GM12878 (cell line): ENCODE measurements at regions of chr6 and their contacts with region 1.

Region 1: DNA sequence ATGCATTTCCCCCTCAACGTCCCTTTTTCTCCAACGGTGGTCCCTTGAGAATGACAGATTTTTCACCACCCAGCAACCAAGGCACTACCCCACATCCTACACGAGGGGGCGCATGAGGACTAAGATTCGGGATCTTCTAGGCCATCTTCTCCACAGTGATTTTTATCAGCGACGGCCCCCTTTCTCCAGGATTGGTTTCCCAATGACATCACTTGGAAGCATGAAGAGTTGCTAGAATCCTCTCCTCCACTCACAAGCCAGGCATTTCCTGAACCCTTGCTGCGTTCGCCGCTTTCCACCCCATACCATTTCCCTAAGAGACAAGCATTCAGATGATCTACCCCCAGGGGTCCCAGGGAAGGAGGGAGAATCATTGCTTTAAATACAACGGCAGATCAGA is 252.0 kb downstream of the HIVEP2 start:
- DNase-seq: no peak
- ATAC-seq: peak; percentile 91
- H3K4me3 ChIP-seq: no peak overlapping the region
- H3K27ac ChIP-seq: no peak overlapping the region
- H3K4me1 ChIP-seq: peaks cover 3% of the 10 kb centered on the region; the same call in 1 of the 2 replicates
- H3K27me3 ChIP-seq: no peaks in the 10 kb centered on the region
- CTCF ChIP-seq: peak; percentile 87 to 93 (median 89)
- EP300 ChIP-seq: no peak
- POLR2A ChIP-seq: no peak
- RAD21 ChIP-seq: peak; percentile 98

Region 2: DNA sequence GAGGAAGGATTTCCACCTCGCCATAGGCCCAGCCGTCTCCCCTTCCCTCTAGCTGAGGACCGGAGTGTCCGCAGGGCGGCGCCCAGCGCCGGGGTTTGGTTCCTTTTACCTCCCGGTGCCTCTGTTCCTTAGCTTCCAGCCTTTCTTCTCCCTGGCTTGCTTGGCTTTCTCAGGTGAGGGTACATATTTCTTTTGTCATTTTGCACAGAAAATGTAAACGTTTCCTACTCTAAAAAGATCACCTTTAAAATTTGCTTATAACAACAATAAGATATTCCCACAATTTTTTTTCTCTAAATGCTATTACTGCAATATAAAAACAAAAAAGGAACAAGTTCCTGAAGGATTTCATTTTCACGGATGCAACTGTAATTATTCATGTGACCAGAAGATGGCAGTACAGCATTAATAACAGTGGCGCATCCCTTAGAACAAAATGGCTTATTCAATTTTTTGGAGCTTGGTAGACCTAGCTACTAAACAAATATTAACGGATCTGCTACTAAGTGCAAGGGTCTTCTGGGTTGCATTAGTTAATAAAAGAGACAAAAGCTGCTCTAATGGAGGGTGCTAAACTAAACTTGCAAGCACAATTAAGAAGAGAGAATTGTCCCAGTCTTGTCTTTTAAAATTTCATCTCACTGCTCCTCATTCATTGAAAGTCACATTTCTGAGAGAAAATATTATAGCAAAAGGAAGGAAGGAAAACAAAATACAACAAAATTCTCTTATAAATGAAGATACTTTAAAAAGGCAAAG is 218.2 kb before region 1 on chr6:
- CTCF ChIA-PET with region 1: interaction called, 4 read pairs
- POLR2A ChIA-PET with region 1: no interaction called
- RAD21 ChIA-PET with region 1: no interaction called
- SMC1A ChIA-PET with region 1: no interaction called
- in situ Hi-C with region 1: no loop called
- intact Hi-C with region 1: loop called (anchors 5 kb)
- DNase-seq: no peak
- ATAC-seq: peak; percentile 69
- H3K4me3 ChIP-seq: no peak overlapping the region
- H3K27ac ChIP-seq: no peak overlapping the region
- H3K4me1 ChIP-seq: no peaks in the 10 kb centered on the region
- H3K27me3 ChIP-seq: no peaks in the 10 kb centered on the region; a peak in 1 of 4 replicates
- CTCF ChIP-seq: peak; percentile 53 to 79 (median 64); a peak in 5 of 6 replicates
- EP300 ChIP-seq: no peak
- POLR2A ChIP-seq: no peak
- RAD21 ChIP-seq: peak; percentile 89

Region 3: GRCh38 chr6:142819603-142820337 is 126.8 kb after region 1 on chr6:
- CTCF ChIA-PET with region 1: interaction called, 11 read pairs
- POLR2A ChIA-PET with region 1: no interaction called
- RAD21 ChIA-PET with region 1: interaction called, 6 read pairs
- SMC1A ChIA-PET with region 1: interaction called, 13 read pairs
- in situ Hi-C with region 1: no loop called
- intact Hi-C with region 1: no loop called
- DNase-seq: peak; percentile 90
- ATAC-seq: peak; percentile 67
- H3K4me3 ChIP-seq: peak overlapping the region; percentile 39; the same call in 1 of the 2 replicates
- H3K27ac ChIP-seq: peak overlapping the region; percentile 88
- H3K4me1 ChIP-seq: peaks cover 40% of the 10 kb centered on the region
- H3K27me3 ChIP-seq: no peaks in the 10 kb centered on the region
- CTCF ChIP-seq: no peak
- EP300 ChIP-seq: peak; percentile 51 to 97
- POLR2A ChIP-seq: no peak
- RAD21 ChIP-seq: 0 out of 2 replicates have a peak, but pooled peaks have one; percentile 4

Region 4: DNA sequence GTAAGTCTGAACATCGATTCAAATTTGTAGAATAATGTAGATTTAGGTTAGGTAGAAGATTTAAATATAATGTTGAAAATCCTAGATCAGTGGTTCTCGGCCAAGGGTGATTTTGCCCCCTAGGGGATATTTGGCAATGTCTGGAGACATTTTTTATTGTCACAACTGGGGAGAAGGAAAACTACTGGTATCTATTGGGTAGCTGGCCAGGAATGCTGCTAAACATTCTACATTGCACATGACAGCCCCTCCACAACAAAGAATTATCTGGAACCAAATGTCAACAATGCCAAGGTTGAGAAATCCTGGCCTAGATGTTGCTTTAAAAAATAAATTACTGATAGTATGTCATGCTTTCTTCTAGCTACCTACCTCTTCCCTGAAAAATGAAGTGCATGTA is 176.0 kb after region 1 on chr6:
- CTCF ChIA-PET with region 1: no interaction called
- POLR2A ChIA-PET with region 1: no interaction called
- RAD21 ChIA-PET with region 1: no interaction called
- SMC1A ChIA-PET with region 1: no interaction called
- in situ Hi-C with region 1: no loop called
- intact Hi-C with region 1: no loop called
- DNase-seq: no peak
- ATAC-seq: no peak
- H3K4me3 ChIP-seq: no peak overlapping the region
- H3K27ac ChIP-seq: no peak overlapping the region
- H3K4me1 ChIP-seq: peaks cover 30% of the 10 kb centered on the region
- H3K27me3 ChIP-seq: no peaks in the 10 kb centered on the region
- CTCF ChIP-seq: no peak
- EP300 ChIP-seq: no peak
- POLR2A ChIP-seq: no peak
- RAD21 ChIP-seq: no peak

Region 5: DNA sequence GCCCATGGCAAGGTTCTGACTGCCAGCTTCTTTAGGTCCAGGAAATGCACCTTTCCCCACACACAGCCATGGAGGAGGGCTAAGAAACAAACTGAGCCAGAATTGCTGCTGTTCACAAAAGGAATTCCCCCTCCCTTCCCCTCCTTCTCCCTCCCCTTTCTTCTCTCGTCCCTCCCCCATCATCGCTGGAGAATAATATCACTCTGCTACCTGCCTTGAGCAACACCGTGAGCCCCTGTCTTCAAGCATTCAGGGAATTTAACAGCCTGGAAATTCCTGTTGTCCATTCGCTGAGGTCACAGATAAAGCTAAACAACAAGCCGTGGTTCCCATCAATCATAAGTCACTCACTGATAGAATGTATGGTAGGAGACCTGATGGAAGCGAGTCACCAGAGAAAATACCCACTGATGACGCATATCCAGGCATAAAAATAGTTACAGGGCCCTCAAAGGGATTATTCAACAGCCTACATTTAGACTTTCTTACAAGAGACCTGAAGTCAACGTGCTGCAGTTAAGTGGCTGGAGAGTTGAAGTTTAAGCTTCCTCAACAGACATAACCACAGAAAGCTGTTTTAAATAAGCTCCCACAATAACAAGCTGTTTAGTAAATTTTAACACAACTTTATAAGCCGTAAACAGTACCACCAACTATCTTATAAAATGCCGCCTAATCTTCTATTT is 192.4 kb after region 1 on chr6:
- CTCF ChIA-PET with region 1: interaction called, 6 read pairs
- POLR2A ChIA-PET with region 1: no interaction called
- RAD21 ChIA-PET with region 1: interaction called, 16 read pairs
- SMC1A ChIA-PET with region 1: interaction called, 14 read pairs
- in situ Hi-C with region 1: no loop called
- intact Hi-C with region 1: loop called (anchors 2 kb)
- DNase-seq: peak; percentile 89
- ATAC-seq: peak; percentile 70
- H3K4me3 ChIP-seq: peak overlapping the region; percentile 57
- H3K27ac ChIP-seq: peak overlapping the region; percentile 75
- H3K4me1 ChIP-seq: peaks cover 38% of the 10 kb centered on the region
- H3K27me3 ChIP-seq: no peaks in the 10 kb centered on the region
- CTCF ChIP-seq: no peak
- EP300 ChIP-seq: peak; percentile 93 to 97
- POLR2A ChIP-seq: peak; percentile 49
- RAD21 ChIP-seq: peak; percentile 14; the same call in 1 of the 2 replicates

Region 6: DNA sequence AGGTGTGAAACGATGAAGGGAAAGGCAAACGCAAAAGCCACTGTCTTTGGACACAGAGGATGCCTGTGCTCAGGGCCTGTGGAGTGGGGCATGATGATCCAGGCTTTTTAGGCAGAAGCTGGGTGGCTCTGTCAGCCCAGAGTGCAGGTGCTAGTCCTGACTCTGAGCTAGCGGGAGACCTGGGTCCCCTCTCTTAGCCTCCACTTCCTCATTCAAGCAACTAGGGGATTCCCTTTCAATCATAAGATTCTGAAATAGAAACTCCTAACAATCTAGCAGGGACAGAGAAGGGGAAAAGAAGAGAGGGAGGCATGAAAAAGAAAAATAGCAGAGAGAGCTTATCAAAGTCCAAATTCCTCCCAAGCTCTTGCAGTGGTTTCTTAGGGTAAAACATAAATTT is 259.7 kb after region 1 on chr6:
- CTCF ChIA-PET with region 1: interaction called, 19 read pairs
- POLR2A ChIA-PET with region 1: interaction called, 6 read pairs
- RAD21 ChIA-PET with region 1: interaction called, 3 read pairs
- SMC1A ChIA-PET with region 1: interaction called, 18 read pairs
- in situ Hi-C with region 1: no loop called
- intact Hi-C with region 1: loop called (anchors 5 kb)
- DNase-seq: no peak
- ATAC-seq: peak; percentile 86
- H3K4me3 ChIP-seq: no peak overlapping the region
- H3K27ac ChIP-seq: no peak overlapping the region; the same call in 1 of the 2 replicates
- H3K4me1 ChIP-seq: peaks cover 21% of the 10 kb centered on the region
- H3K27me3 ChIP-seq: no peaks in the 10 kb centered on the region
- CTCF ChIP-seq: 0 out of 6 replicates have a peak, but pooled peaks of 1 of the 3 experiments have one; percentile 7
- EP300 ChIP-seq: peak; percentile 14 to 63; a peak in 1 of 4 replicates
- POLR2A ChIP-seq: no peak
- RAD21 ChIP-seq: peak; percentile 34; the same call in 1 of the 2 replicates

Region 7: GRCh38 chr6:143232849-143233248 is 539.9 kb after region 1 on chr6:
- CTCF ChIA-PET with region 1: interaction called, 9 read pairs
- POLR2A ChIA-PET with region 1: no interaction called
- RAD21 ChIA-PET with region 1: interaction called, 3 read pairs
- SMC1A ChIA-PET with region 1: interaction called, 5 read pairs
- in situ Hi-C with region 1: no loop called
- intact Hi-C with region 1: loop called (anchors 2 kb)
- DNase-seq: peak; percentile 2
- ATAC-seq: peak; percentile 89
- H3K4me3 ChIP-seq: no peak overlapping the region
- H3K27ac ChIP-seq: no peak overlapping the region
- H3K4me1 ChIP-seq: no peaks in the 10 kb centered on the region
- H3K27me3 ChIP-seq: no peaks in the 10 kb centered on the region
- CTCF ChIP-seq: peak; percentile 62 to 70 (median 67)
- EP300 ChIP-seq: no peak
- POLR2A ChIP-seq: no peak
- RAD21 ChIP-seq: peak; percentile 82

Region 8: DNA sequence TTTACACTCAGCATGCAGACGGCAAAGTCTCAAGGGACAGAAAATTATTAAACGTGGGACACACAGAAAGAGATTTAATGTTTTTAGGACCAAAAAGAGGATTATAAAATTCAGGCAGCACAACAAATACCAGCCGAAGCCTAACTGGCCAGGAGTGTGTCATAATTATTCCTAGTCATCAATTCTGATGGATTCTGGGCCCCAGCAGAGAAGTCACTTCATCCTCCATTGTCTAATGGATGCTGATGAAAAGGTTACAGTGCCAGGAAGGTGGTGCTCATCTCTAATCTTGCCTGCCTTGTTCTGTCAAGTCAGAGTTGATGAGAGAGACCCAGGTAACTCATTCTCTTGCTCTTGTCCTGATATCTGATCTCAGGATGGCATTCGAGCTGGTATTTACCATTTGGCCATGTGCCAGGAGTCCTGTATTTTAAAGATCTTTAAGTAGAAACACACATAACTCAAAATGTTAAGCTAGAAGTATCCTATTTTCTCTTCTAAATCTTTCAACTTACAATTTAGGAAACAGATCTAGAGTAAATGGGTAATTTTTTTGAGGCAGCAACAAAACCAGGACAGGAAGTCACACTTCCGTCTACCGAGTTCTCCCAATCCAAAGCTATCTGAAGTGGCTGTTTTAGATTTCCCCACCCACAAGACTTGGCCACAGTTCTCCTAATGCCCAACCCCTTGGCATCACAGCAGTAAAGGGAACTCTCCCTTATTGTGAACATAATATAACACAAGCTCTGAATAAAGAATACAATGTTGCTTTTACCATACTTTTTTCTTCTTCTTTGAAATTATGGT is 707.5 kb after region 1 on chr6:
- CTCF ChIA-PET with region 1: no interaction called
- POLR2A ChIA-PET with region 1: no interaction called
- RAD21 ChIA-PET with region 1: no interaction called
- SMC1A ChIA-PET with region 1: no interaction called
- in situ Hi-C with region 1: loop called (anchors 25 kb)
- intact Hi-C with region 1: no loop called
- DNase-seq: no peak
- ATAC-seq: peak; percentile 82
- H3K4me3 ChIP-seq: no peak overlapping the region
- H3K27ac ChIP-seq: no peak overlapping the region
- H3K4me1 ChIP-seq: peaks cover 4% of the 10 kb centered on the region; the same call in 1 of the 2 replicates
- H3K27me3 ChIP-seq: no peaks in the 10 kb centered on the region
- CTCF ChIP-seq: no peak
- EP300 ChIP-seq: no peak
- POLR2A ChIP-seq: no peak
- RAD21 ChIP-seq: no peak